ENCODE measurements at regions of chr16 and their contacts with region 1.

Region 1: GRCh38 chr16:34758835-34759234 is 1299.4 kb downstream of the TP53TG3F start:
- DNase-seq: no peak
- ATAC-seq: no peak
- H3K4me3 ChIP-seq: no peak overlapping the region
- H3K27ac ChIP-seq: no peak overlapping the region
- H3K4me1 ChIP-seq: no peaks in the 10 kb centered on the region
- H3K27me3 ChIP-seq: no peaks in the 10 kb centered on the region
- CTCF ChIP-seq: no peak
- EP300 ChIP-seq: no peak
- POLR2A ChIP-seq: no peak
- RAD21 ChIP-seq: no peak

Region 2: GRCh38 chr16:34598871-34599270 is 160.0 kb before region 1 on chr16:
- CTCF ChIA-PET with region 1: no interaction called
- POLR2A ChIA-PET with region 1: no interaction called
- RAD21 ChIA-PET with region 1: no interaction called
- SMC1A ChIA-PET with region 1: no interaction called
- in situ Hi-C with region 1: no loop called
- intact Hi-C with region 1: no loop called
- DNase-seq: no peak
- ATAC-seq: no peak
- H3K4me3 ChIP-seq: no peak overlapping the region
- H3K27ac ChIP-seq: no peak overlapping the region
- H3K4me1 ChIP-seq: no peaks in the 10 kb centered on the region
- H3K27me3 ChIP-seq: no peaks in the 10 kb centered on the region
- CTCF ChIP-seq: no peak
- EP300 ChIP-seq: no peak
- POLR2A ChIP-seq: no peak
- RAD21 ChIP-seq: no peak

Region 3: DNA sequence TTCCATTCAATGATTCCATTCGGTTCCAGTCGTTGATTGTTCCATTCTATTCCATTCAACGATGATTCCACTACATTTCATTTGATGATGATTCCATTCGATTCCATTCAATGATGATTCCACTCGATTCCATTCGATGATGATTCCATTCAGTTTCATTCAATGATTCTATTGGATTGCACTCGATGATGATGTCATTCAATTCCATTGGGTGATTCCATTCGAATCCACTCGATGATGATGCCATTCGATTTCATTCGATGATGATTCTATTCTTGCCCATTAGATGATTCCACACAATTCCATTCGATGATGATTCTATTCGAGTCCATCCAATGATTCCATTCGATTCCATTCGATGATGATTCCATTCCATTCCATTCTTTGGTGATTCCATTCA is 15.7 kb before region 1 on chr16:
- CTCF ChIA-PET with region 1: no interaction called
- POLR2A ChIA-PET with region 1: no interaction called
- RAD21 ChIA-PET with region 1: no interaction called
- SMC1A ChIA-PET with region 1: no interaction called
- in situ Hi-C with region 1: no loop called
- intact Hi-C with region 1: no loop called
- DNase-seq: no peak
- ATAC-seq: no peak
- H3K4me3 ChIP-seq: no peak overlapping the region
- H3K27ac ChIP-seq: no peak overlapping the region
- H3K4me1 ChIP-seq: no peaks in the 10 kb centered on the region
- H3K27me3 ChIP-seq: no peaks in the 10 kb centered on the region
- CTCF ChIP-seq: no peak
- EP300 ChIP-seq: no peak
- POLR2A ChIP-seq: no peak
- RAD21 ChIP-seq: no peak

Region 4: GRCh38 chr16:35252356-35252941 is 493.6 kb after region 1 on chr16:
- CTCF ChIA-PET with region 1: no interaction called
- POLR2A ChIA-PET with region 1: no interaction called
- RAD21 ChIA-PET with region 1: no interaction called
- SMC1A ChIA-PET with region 1: no interaction called
- in situ Hi-C with region 1: loop called (anchors 25 kb)
- intact Hi-C with region 1: no loop called
- DNase-seq: no peak
- ATAC-seq: no peak
- H3K4me3 ChIP-seq: no peak overlapping the region
- H3K27ac ChIP-seq: no peak overlapping the region
- H3K4me1 ChIP-seq: no peaks in the 10 kb centered on the region
- H3K27me3 ChIP-seq: no peaks in the 10 kb centered on the region
- CTCF ChIP-seq: no peak
- EP300 ChIP-seq: no peak
- POLR2A ChIP-seq: no peak
- RAD21 ChIP-seq: no peak